Esophagus muscularis mucosa (tissue), 4 donors: ENCODE measurements at regions of chr12 and their contacts with region 1.

Region 1: GRCh38 chr12:29519585-29520182 is 22.2 kb upstream of the OVCH1 start:
- DNase-seq: no peak
- H3K4me3 ChIP-seq: no peak overlapping the region
- H3K27ac ChIP-seq: no peak overlapping the region
- H3K4me1 ChIP-seq: no peaks in the 10 kb centered on the region
- H3K27me3 ChIP-seq: no peaks in the 10 kb centered on the region
- CTCF ChIP-seq: peak; percentile 51 to 63 (median 57)
- EP300 ChIP-seq: no peak
- POLR2A ChIP-seq: no peak

Region 2: DNA sequence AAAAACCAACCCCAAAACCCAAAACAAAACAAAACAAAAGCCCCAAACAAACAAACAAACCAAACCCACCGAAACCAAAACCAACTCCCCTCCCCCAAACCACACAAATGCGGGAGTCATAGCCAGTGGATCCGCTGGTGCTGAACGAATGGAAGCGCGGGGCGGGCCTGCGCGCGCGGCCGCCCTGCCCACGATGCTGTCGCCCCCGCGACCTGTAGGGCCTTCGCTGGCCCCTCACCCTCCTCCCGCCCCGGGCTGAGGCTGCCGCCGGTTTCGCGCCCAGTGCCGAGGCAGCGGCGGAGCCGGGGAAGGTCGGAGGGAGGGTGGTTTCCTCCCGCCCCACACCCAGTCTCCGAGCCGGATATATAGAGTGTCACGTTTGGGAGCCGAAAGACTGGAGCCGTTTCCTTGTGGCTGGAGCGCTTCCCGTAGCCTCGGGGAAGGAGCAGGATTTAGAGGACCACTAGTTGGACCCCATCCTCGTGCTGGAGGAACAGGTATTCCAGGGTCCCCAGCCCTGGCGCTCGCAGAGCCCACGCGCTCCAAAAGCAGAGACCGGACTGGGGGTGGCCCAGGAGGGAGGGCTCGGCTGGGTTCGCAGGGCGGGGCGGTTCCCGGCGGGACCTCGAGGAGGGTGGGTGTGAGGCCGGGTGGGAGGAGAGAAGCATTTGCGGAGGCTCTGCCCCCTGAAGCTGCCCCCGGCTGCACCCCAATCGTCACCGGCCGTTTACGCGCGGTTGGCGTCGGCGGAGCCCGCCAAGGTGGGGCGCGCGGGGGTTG is 370.6 kb before region 1 on chr12 and contains the start of gene FAR2:
- intact Hi-C with region 1: no loop called
- DNase-seq: no peak
- H3K4me3 ChIP-seq: peak within 1 kb of the TSS; percentile 81 to 91 (median 88)
- H3K27ac ChIP-seq: peak within 1 kb of the TSS; percentile 84 to 90 (median 88)
- H3K4me1 ChIP-seq: peaks cover 4 to 45% (median 42%) of the 10 kb centered on the region in 4 donors
- H3K27me3 ChIP-seq: no peaks in the 10 kb centered on the region
- CTCF ChIP-seq: no peak
- EP300 ChIP-seq: no peak
- POLR2A ChIP-seq: no peak
- total RNA-seq, gene FAR2: 11.6 to 15.0 (median 11.9) TPM

Region 3: DNA sequence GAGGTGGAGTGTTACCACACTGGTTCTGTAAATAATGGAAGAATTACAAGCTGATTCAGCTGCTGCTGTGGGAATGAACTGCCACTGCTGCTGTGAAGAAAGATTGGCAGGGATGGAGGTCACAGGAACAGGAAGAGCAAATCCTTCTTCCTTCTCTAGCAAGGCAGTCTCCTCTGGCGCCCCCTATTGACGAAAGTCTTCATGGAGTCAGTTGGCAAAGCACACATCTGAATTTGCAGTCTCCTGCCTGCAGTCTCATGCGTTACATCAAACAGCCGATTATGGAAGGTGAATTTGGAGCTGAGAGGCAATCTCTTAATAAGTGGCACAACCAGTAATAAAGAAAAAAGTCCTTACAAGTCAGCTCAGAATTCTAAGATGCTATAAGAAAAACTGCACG is 370.1 kb after region 1 on chr12:
- intact Hi-C with region 1: loop called (anchors 10 kb)
- DNase-seq: no peak
- H3K4me3 ChIP-seq: no peak overlapping the region
- H3K27ac ChIP-seq: no peak overlapping the region
- H3K4me1 ChIP-seq: no peaks in the 10 kb centered on the region
- H3K27me3 ChIP-seq: no peaks in the 10 kb centered on the region
- CTCF ChIP-seq: peak; percentile 35 to 63 (median 50)
- EP300 ChIP-seq: no peak
- POLR2A ChIP-seq: no peak